ENCODE measurements at regions of chr9 and their contacts with region 1.

Region 1: DNA sequence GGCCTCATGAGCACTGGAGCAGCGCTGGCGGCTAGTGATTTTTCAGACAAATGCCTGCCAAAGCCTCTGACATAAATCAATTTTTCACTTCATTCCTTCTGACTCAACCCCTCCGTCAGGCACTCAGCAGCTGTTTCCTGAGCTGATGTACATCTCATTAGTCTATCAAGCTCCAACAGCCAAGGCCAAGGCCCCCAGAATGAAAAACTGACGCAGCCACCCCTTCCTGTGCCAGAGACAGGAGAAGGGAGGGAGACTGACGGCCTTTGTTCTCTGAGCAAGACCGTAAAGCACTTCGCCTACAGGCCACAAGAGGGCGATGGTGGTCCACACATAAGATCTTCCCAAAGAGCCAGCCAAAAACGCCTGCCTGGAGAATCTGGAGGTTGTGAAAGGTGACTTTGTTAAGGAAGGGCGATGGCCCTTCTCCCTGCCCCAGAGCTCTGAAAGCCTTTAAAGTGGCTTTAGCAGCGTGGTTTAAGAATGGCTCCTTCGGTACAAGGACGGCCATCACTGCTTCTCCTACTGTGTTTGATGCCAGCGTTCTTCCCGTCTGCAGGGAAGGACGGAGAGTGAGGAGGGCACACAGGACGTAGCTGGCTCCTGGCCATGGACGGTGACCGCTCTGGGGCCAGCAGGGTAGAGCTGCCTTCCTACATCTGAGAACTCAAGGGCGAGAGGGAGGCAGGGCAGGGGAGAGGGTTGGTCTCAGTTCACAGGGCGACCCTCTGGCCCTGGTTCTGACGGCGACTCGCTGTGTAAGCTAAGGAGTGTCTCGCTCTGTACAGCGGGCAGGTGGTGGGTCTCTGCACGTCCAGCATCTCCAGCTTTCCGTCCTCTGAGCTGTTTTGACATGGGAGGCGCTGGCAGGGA is 37.0 kb downstream of the ALG2 start:
- DNase-seq: peak; percentile 77
- H3K4me3 ChIP-seq: no peak overlapping the region
- H3K27ac ChIP-seq: no peak overlapping the region
- H3K4me1 ChIP-seq: no peaks in the 10 kb centered on the region
- H3K27me3 ChIP-seq: no peaks in the 10 kb centered on the region
- CTCF ChIP-seq: peak; percentile 95

Region 2: DNA sequence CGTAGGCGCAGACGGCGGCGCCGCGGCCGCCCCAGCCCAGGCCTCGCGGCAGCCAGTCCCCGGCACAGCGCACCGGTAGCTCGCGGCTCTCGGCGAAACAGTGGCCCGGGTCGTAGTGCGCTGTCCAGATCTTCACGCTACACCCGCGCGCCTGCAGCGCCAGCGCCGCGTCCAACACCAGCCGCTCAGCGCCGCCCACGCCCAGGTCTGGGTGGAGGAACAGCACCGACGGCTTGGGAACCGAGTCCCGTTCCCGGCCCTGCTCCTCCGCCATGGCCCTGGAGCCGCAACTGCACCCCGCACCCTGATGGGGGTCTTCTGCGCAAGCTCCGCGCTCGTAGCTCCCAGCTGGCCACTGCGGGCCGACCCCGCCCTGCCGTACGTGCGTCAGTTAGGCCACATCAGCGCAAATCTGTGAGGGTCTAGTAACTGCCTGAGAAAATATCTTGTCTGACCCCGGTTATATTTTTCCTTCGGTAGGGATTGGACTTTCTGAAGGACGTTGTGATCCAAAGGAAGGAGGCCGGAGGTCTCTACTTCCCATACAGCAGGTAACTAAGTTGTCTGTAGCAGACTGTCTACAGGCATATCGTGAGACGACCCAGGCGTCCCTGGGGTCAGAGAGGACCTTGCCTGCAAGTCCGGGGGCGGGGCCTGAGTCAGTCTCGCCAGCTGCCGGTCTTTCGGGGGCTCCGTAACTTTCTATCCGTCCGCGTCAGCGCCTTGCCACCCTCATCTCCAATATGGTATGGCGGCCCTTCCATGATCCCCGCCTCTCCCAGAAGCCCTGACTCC is 37.1 kb after region 1 on chr9 and contains the starts of genes ALG2 and SEC61B:
- CTCF ChIA-PET with region 1: no interaction called
- dilution Hi-C with region 1: no loop called
- in situ Hi-C with region 1: no loop called
- intact Hi-C with region 1: loop called (anchors 2 kb)
- DNase-seq: peak; percentile 91
- H3K4me3 ChIP-seq: peak within 1 kb of the TSS; percentile 88 to 98 (median 98)
- H3K27ac ChIP-seq: peak within 1 kb of the TSS; percentile 94
- H3K4me1 ChIP-seq: peaks cover 16% of the 10 kb centered on the region
- H3K27me3 ChIP-seq: no peaks in the 10 kb centered on the region
- CTCF ChIP-seq: no peak
- total RNA-seq, gene ALG2: 42.1 to 56.5 TPM
- total RNA-seq, gene SEC61B: 62.0 to 164 TPM

Region 3: GRCh38 chr9:99266255-99267023 is 81.7 kb after region 1 on chr9:
- CTCF ChIA-PET with region 1: interaction called, 4 read pairs
- dilution Hi-C with region 1: no loop called
- in situ Hi-C with region 1: no loop called
- intact Hi-C with region 1: loop called (anchors 5 kb)
- DNase-seq: peak; percentile 44
- H3K4me3 ChIP-seq: no peak overlapping the region
- H3K27ac ChIP-seq: no peak overlapping the region
- H3K4me1 ChIP-seq: no peaks in the 10 kb centered on the region
- H3K27me3 ChIP-seq: no peaks in the 10 kb centered on the region
- CTCF ChIP-seq: peak; percentile 71 to 89

Region 4: DNA sequence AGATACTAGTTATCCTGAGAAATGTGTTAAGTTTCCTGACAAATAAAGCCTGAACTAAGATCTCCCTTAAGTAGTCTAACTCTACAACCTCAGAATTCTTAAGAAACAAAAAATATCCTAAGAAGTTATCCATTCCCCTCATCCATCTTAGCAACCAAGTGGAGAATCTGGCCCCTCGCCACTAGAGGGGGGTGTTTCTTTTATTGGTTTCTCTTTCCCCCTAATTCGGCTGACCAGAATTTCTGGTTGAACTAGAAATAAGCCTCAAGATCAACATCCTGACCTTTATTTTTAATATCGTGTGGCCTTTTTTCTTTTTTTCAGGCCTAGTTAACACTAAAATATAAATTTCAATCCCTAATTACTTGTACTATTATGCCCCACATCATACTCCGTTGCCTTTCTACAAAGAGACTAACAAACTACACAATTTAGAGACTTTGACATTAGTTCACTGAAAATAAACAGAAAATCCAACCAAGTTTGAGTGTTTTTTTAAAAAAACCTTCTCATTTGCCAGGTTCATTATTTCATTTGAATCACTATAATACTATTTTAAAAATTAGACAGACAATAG is 622.7 kb after region 1 on chr9:
- CTCF ChIA-PET with region 1: no interaction called
- dilution Hi-C with region 1: no loop called
- in situ Hi-C with region 1: no loop called
- intact Hi-C with region 1: loop called (anchors 2 kb)
- DNase-seq: peak; percentile 63
- H3K4me3 ChIP-seq: no peak overlapping the region
- H3K27ac ChIP-seq: no peak overlapping the region
- H3K4me1 ChIP-seq: peaks cover 4% of the 10 kb centered on the region
- H3K27me3 ChIP-seq: no peaks in the 10 kb centered on the region
- CTCF ChIP-seq: peak; percentile 71 to 78

Region 5: GRCh38 chr9:100011062-100011681 is 826.5 kb after region 1 on chr9:
- CTCF ChIA-PET with region 1: no interaction called
- dilution Hi-C with region 1: no loop called
- in situ Hi-C with region 1: no loop called
- intact Hi-C with region 1: loop called (anchors 2 kb)
- DNase-seq: peak; percentile 29
- H3K4me3 ChIP-seq: no peak overlapping the region
- H3K27ac ChIP-seq: no peak overlapping the region
- H3K4me1 ChIP-seq: no peaks in the 10 kb centered on the region
- H3K27me3 ChIP-seq: no peaks in the 10 kb centered on the region
- CTCF ChIP-seq: peak; percentile 60 to 69

Region 6: DNA sequence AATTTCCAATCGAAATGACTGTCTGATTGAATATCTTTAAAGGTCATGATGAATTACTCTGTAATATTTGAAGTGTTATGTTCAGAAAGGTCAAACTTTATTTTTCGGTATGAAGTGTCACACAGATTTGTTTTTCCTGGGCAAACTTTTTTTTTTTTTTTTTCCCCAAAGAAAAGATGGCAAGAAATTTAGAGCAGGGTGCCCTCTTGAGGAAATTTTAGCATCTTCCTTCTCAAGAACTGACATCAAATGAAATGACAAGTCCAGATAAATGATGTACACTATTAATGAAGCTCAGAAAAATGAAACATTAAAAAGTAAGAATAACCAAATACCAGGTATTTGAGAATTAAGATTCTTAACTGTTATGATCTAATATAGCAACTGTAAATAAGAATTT is 1038.0 kb after region 1 on chr9:
- CTCF ChIA-PET with region 1: no interaction called
- dilution Hi-C with region 1: no loop called
- in situ Hi-C with region 1: no loop called
- intact Hi-C with region 1: loop called (anchors 5 kb)
- DNase-seq: peak; percentile 17
- H3K4me3 ChIP-seq: no peak overlapping the region
- H3K27ac ChIP-seq: no peak overlapping the region
- H3K4me1 ChIP-seq: no peaks in the 10 kb centered on the region
- H3K27me3 ChIP-seq: no peaks in the 10 kb centered on the region
- CTCF ChIP-seq: peak; percentile 21 to 45

Region 7: GRCh38 chr9:100322954-100323536 is 1138.3 kb after region 1 on chr9:
- CTCF ChIA-PET with region 1: no interaction called
- dilution Hi-C with region 1: no loop called
- in situ Hi-C with region 1: no loop called
- intact Hi-C with region 1: loop called (anchors 1 kb)
- DNase-seq: peak; percentile 20
- H3K4me3 ChIP-seq: no peak overlapping the region
- H3K27ac ChIP-seq: no peak overlapping the region
- H3K4me1 ChIP-seq: peaks cover 3% of the 10 kb centered on the region
- H3K27me3 ChIP-seq: no peaks in the 10 kb centered on the region
- CTCF ChIP-seq: peak; percentile 59 to 63